T-cell (primary cell): ENCODE measurements at regions of chr16 and their contacts with region 1.

Region 1: DNA sequence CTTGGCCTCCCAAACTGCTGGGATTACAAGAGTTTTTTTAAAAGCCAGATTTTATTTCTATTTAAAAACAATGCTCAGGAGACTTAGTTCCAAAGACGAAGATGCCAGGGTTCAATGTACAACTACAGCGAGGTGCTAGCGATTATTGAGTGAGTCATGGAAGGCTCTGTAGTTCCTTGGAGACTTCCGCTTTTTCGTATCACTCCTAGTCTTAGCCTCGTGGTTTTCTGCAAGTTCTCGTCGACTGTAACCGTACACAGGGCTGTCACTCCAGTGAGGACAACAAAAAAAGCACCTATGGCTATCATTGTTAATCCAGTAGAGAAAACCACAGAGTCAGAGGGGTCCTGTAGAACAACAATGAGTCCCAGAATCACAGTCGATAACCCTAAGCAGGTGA is 22.7 kb upstream of the ZC3H7A start:
- DNase-seq: no peak
- ATAC-seq: no peak
- H3K4me3 ChIP-seq: no peak overlapping the region
- H3K4me3 Mint-ChIP-seq: no peak overlapping the region
- H3K27ac ChIP-seq: no peak overlapping the region
- H3K27ac Mint-ChIP-seq: no peak overlapping the region
- H3K4me1 ChIP-seq: no peaks in the 10 kb centered on the region
- H3K4me1 Mint-ChIP-seq: no peaks in the 10 kb centered on the region
- H3K27me3 ChIP-seq: no peaks in the 10 kb centered on the region
- H3K27me3 Mint-ChIP-seq: no peaks in the 10 kb centered on the region

Region 2: DNA sequence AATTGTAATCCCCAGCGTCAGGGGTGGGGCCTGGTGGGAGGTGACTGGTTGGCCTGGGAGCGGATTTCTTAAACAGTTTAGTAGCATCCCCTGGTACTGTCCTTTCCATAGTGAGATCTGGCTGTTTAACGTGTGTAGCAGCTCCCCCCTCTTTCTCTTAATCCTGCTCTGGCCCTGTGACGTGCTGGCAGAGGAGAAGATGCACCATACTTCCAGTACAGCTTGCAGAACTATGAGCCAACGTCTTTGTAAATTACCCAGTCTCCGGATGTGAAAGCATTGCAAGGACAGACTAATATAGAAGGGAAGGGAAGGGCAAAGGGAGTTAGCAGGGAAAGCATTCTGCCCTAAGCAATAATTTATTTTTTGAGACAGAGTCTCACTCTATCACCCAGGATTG is 390.7 kb before region 1 on chr16:
- CTCF ChIA-PET with region 1: no interaction called
- POLR2A ChIA-PET with region 1: interaction called in 1 of 2 experiments, 13 read pairs
- DNase-seq: no peak
- ATAC-seq: no peak
- H3K4me3 ChIP-seq: no peak overlapping the region
- H3K4me3 Mint-ChIP-seq: no peak overlapping the region
- H3K27ac ChIP-seq: no peak overlapping the region
- H3K27ac Mint-ChIP-seq: no peak overlapping the region
- H3K4me1 ChIP-seq: no peaks in the 10 kb centered on the region
- H3K4me1 Mint-ChIP-seq: no peaks in the 10 kb centered on the region
- H3K27me3 ChIP-seq: peaks cover 0 to 5% of the 10 kb centered on the region in 2 experiments
- H3K27me3 Mint-ChIP-seq: no peaks in the 10 kb centered on the region

Region 3: GRCh38 chr16:11851294-11852091 is 31.7 kb after region 1 on chr16 and contains the start of gene RSL1D1:
- CTCF ChIA-PET with region 1: no interaction called
- POLR2A ChIA-PET with region 1: interaction called in 1 of 2 experiments, 11 read pairs
- DNase-seq: peak; percentile 79 to 98 (median 90)
- ATAC-seq: peak; percentile 86 to 93 (median 88)
- H3K4me3 ChIP-seq: peak within 1 kb of the TSS; percentile 90 to 98
- H3K4me3 Mint-ChIP-seq: peak within 1 kb of the TSS; percentile 97 to 100 (median 99)
- H3K27ac ChIP-seq: peak within 1 kb of the TSS; percentile 75
- H3K27ac Mint-ChIP-seq: peak within 1 kb of the TSS; percentile 92 to 93
- H3K4me1 ChIP-seq: peaks cover 20 to 51% of the 10 kb centered on the region in 2 experiments
- H3K4me1 Mint-ChIP-seq: peaks cover 56 to 72% (median 62%) of the 10 kb centered on the region in 3 donors
- H3K27me3 ChIP-seq: no peaks in the 10 kb centered on the region
- H3K27me3 Mint-ChIP-seq: no peaks in the 10 kb centered on the region
- total RNA-seq, gene RSL1D1: 165 to 205 (median 180) TPM